Natural killer cell (primary cell): ENCODE measurements at regions of chr7 and their contacts with region 1.

Region 1: DNA sequence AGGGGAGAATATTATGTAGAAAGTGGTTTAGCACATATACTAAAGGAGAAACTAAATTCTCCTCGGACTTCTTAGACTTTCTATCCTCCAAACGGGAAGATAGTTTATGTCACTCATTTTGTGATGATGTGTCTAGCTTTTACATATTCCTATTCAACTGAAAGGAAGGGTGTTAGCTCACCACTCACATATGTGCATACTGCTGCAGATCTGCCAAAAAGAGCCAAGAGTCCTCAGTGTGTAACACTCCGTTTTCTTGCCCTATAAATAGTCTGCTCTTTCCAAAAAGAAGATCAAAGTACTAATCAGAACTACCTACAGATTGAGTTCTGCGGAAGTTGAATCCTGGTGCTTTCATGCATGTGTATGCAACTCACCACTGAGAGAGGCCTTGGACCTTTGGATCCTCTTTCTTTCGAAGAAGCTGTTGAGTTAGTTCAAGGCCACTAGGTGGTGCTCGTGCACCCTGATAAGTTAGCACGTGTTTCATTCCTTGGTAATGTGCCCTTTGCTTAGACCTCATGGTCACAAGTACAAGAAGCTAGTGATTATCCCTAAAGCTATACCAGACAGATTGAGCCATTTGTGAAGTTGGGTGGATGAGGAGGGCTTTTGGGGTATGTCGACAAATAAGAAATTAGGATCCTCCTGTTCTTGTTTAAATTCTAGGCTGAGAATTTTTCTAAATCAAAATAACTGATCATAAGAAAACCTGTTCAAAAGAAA is 14.1 kb downstream of the YAE1 start:
- DNase-seq: peak; percentile 62 to 94
- ATAC-seq: peak; percentile 87 to 99 (median 98)
- H3K4me3 ChIP-seq: no peak overlapping the region
- H3K4me3 Mint-ChIP-seq: no peak overlapping the region
- H3K27ac ChIP-seq: no peak overlapping the region
- H3K27ac Mint-ChIP-seq: no peak overlapping the region
- H3K4me1 ChIP-seq: no peaks in the 10 kb centered on the region
- H3K4me1 Mint-ChIP-seq: no peaks in the 10 kb centered on the region
- H3K27me3 ChIP-seq: no peaks in the 10 kb centered on the region
- H3K27me3 Mint-ChIP-seq: no peaks in the 10 kb centered on the region
- CTCF ChIP-seq: peak; percentile 91

Region 2: DNA sequence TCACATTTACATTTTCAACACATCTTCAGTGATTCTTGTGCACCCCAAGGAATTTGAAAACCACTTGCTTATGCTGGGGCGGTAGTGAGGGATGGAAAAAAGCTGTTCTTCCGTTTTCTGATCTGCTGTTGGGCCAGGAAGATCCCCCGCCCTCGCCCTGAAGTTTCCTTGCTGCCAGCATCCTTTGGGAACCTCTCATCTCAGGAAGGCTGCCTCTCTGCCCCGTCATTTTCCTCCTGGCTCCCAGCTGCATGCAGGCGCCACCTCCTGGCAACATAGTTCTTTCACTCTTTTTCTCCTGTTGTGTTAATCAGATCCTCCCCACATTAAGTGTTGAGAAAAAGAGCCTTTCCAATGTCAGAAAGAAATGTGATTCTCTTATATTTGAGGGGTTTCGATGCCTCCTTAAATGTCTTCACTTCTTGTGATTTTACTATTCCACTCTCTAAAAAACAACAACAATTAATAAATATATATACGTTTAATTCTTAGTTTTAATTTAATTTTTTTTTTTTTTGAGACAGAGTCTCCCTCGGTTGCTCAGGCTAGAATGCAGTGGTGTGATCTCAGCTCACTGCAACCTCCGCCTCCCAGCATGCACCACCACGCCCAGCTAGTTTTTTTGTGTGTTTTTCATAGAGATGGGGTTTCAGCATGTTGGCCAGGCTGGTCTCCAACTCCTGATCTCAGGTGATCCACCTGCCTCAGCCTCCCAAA is 165.9 kb after region 1 on chr7:
- intact Hi-C with region 1: loop called (anchors 1 kb)
- DNase-seq: peak; percentile 28 to 79
- ATAC-seq: peak in 2 of 3 donors; percentile 53 to 54
- H3K4me3 ChIP-seq: no peak overlapping the region
- H3K4me3 Mint-ChIP-seq: no peak overlapping the region
- H3K27ac ChIP-seq: no peak overlapping the region
- H3K27ac Mint-ChIP-seq: peak overlapping the region in 1 of 2 donors; percentile 26
- H3K4me1 ChIP-seq: no peaks in the 10 kb centered on the region
- H3K4me1 Mint-ChIP-seq: peaks cover 13 to 24% of the 10 kb centered on the region in 2 donors
- H3K27me3 ChIP-seq: no peaks in the 10 kb centered on the region
- H3K27me3 Mint-ChIP-seq: no peaks in the 10 kb centered on the region
- CTCF ChIP-seq: peak; percentile 61

Region 3: GRCh38 chr7:40057292-40057691 is 477.0 kb after region 1 on chr7:
- intact Hi-C with region 1: loop called (anchors 1 kb)
- DNase-seq: no peak
- ATAC-seq: no peak
- H3K4me3 ChIP-seq: no peak overlapping the region
- H3K4me3 Mint-ChIP-seq: no peak overlapping the region
- H3K27ac ChIP-seq: no peak overlapping the region
- H3K27ac Mint-ChIP-seq: peak overlapping the region; percentile 37 to 69
- H3K4me1 ChIP-seq: no peaks in the 10 kb centered on the region
- H3K4me1 Mint-ChIP-seq: peaks cover 17 to 21% of the 10 kb centered on the region in 2 donors
- H3K27me3 ChIP-seq: no peaks in the 10 kb centered on the region
- H3K27me3 Mint-ChIP-seq: no peaks in the 10 kb centered on the region
- CTCF ChIP-seq: no peak